Activated CD4-positive, alpha-beta T cell treated with anti-CD3 and anti-CD28 coated beads, Interleukin-2, amount 10 ng/mL, durations not matched to agents 24 days and 14 days (primary cell): ENCODE measurements at regions of chr3 and their contacts with region 1.

Region 1: GRCh38 chr3:179604321-179605078 is at the starts of genes MRPL47 and NDUFB5:
- DNase-seq: peak; percentile 98
- H3K4me3 Mint-ChIP-seq: peak within 1 kb of the TSS; percentile 99
- H3K27ac Mint-ChIP-seq: peak within 1 kb of the TSS; percentile 100
- H3K4me1 Mint-ChIP-seq: peaks cover 34% of the 10 kb centered on the region
- H3K27me3 Mint-ChIP-seq: no peaks in the 10 kb centered on the region
- total RNA-seq, gene MRPL47: 66.6 and 68.2 TPM in 2 replicates
- total RNA-seq, gene NDUFB5: 91.8 and 98.6 TPM in 2 replicates

Region 2: GRCh38 chr3:179071550-179072397 is 532.7 kb before region 1 on chr3 and contains the start of gene ZMAT3:
- intact Hi-C with region 1: loop called (anchors 5 kb)
- DNase-seq: peak; percentile 96
- H3K4me3 Mint-ChIP-seq: peak within 1 kb of the TSS; percentile 99
- H3K27ac Mint-ChIP-seq: peak within 1 kb of the TSS; percentile 96
- H3K4me1 Mint-ChIP-seq: peaks cover 35% of the 10 kb centered on the region
- H3K27me3 Mint-ChIP-seq: no peaks in the 10 kb centered on the region
- total RNA-seq, gene ZMAT3: 11.8 and 13.1 TPM in 2 replicates

Region 3: DNA sequence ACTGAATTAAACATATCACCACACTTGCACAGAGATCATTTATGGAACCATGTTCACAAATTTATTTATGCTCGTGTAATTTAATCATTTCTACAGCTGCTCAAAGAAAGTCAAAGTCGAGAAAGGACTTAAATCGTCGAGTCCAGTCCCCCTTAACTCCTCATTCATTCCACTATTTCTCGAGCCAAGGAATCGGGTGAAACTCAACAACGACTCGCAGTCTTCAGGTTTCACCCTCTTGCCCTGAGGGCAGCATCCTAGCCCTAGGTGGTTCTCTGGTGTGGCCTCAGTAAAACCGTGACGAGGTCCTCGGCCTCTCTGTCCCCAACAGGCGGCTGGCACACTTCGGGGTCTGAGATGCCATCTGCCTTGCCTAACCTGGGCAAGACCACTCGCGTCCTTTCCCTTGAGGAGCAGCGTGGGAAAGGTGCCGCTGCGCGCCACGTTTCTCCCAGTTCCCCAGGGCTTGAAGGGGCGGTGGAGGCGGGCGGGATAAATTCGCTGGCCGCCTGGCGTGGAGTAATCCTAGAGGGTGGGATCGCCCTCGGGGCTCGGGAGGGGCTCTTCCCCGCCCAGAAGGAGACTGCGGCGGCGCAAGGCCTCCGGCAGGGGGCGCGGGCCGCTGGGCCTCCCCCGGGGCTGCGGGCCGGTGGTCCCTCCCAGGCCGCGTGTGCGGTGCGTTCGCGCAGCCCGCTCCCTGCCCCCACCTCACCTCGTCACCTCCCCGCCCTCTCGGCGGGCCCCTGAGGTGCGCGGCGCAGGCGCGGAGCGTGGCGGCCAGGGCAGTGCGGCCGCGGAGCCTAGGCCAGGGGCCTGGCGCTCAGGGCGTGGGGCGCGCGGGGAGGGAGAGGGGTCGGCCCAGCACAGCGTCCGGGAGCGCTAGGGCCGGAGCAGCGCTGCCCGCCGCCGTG is 282.0 kb before region 1 on chr3 and contains the start of gene ZNF639:
- intact Hi-C with region 1: loop called (anchors 2 kb)
- DNase-seq: peak; percentile 95
- H3K4me3 Mint-ChIP-seq: peak within 1 kb of the TSS; percentile 89
- H3K27ac Mint-ChIP-seq: peak within 1 kb of the TSS; percentile 93
- H3K4me1 Mint-ChIP-seq: peaks cover 27% of the 10 kb centered on the region
- H3K27me3 Mint-ChIP-seq: peaks cover 5% of the 10 kb centered on the region
- total RNA-seq, gene ZNF639: 36.7 and 38.1 TPM in 2 replicates

Region 4: GRCh38 chr3:179347345-179348194 is 256.9 kb before region 1 on chr3 and contains the start of gene MFN1:
- intact Hi-C with region 1: loop called (anchors 1 kb)
- DNase-seq: peak; percentile 97
- H3K4me3 Mint-ChIP-seq: peak within 1 kb of the TSS; percentile 100
- H3K27ac Mint-ChIP-seq: peak within 1 kb of the TSS; percentile 98
- H3K4me1 Mint-ChIP-seq: peaks cover 14% of the 10 kb centered on the region
- H3K27me3 Mint-ChIP-seq: no peaks in the 10 kb centered on the region
- total RNA-seq, gene MFN1: 36.2 and 37.0 TPM in 2 replicates

Region 5: GRCh38 chr3:179451265-179452175 is 153.0 kb before region 1 on chr3 and contains the start of gene GNB4:
- intact Hi-C with region 1: loop called (anchors 5 kb)
- DNase-seq: peak; percentile 90
- H3K4me3 Mint-ChIP-seq: peak within 1 kb of the TSS; percentile 85
- H3K27ac Mint-ChIP-seq: peak within 1 kb of the TSS; percentile 87
- H3K4me1 Mint-ChIP-seq: peaks cover 30% of the 10 kb centered on the region
- H3K27me3 Mint-ChIP-seq: peaks cover 68% of the 10 kb centered on the region
- total RNA-seq, gene GNB4: 11.8 and 14.0 TPM in 2 replicates

Region 6: DNA sequence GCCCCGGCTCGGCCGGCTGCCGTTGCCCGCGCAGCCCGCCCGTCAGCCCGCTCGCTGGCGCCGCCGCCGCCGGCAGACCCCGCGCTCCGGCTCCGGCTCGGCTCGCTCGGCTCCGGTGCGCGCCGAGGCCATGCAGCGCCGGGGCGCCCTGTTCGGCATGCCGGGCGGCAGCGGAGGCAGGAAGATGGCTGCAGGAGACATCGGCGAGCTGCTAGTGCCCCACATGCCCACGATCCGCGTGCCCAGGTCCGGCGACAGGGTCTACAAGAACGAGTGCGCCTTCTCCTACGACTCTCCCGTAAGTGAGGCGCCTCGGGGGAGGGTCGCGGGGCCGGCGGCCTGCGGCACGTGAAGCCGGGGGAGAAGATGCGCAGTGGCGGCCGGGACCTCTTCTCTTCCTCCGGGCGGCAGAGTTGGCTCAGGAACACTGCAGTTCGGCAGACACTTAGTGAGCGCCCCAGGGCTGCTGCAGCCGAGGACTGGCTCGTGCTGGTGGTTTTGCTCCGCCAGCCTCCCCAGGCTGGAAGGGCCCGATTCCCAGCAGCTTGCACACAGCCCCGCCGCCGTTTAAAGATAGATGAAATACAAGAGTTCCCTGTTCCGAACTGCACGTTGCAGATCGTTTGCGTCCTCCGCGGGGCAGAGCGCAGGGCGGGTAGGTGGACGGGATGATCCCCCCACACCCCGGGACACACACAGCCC is 48.7 kb after region 1 on chr3:
- intact Hi-C with region 1: loop called (anchors 1 kb)
- DNase-seq: peak; percentile 89
- H3K4me3 Mint-ChIP-seq: peak overlapping the region; percentile 93
- H3K27ac Mint-ChIP-seq: peak overlapping the region; percentile 92
- H3K4me1 Mint-ChIP-seq: peaks cover 17% of the 10 kb centered on the region
- H3K27me3 Mint-ChIP-seq: peaks cover 15% of the 10 kb centered on the region

Region 7: GRCh38 chr3:179768080-179768479 is 163.6 kb after region 1 on chr3:
- intact Hi-C with region 1: no loop called
- DNase-seq: no peak
- H3K4me3 Mint-ChIP-seq: no peak overlapping the region
- H3K27ac Mint-ChIP-seq: no peak overlapping the region
- H3K4me1 Mint-ChIP-seq: no peaks in the 10 kb centered on the region
- H3K27me3 Mint-ChIP-seq: no peaks in the 10 kb centered on the region

Region 8: GRCh38 chr3:180912304-180913296 is 1308.1 kb after region 1 on chr3 and contains the start of gene FXR1:
- intact Hi-C with region 1: loop called (anchors 1 kb)
- DNase-seq: peak; percentile 94
- H3K4me3 Mint-ChIP-seq: peak within 1 kb of the TSS; percentile 98
- H3K27ac Mint-ChIP-seq: peak within 1 kb of the TSS; percentile 97
- H3K4me1 Mint-ChIP-seq: peaks cover 29% of the 10 kb centered on the region
- H3K27me3 Mint-ChIP-seq: no peaks in the 10 kb centered on the region
- total RNA-seq, gene FXR1: 149 and 161 TPM in 2 replicates